ENCODE measurements at regions of chr19 and their contacts with region 1.

Region 1: GRCh38 chr19:28710278-28710677 is 502.7 kb downstream of the UQCRFS1 start:
- H3K4me3 ChIP-seq: no peak overlapping the region
- H3K27ac ChIP-seq: no peak overlapping the region
- H3K4me1 ChIP-seq: peaks cover 8% of the 10 kb centered on the region; the same call in 1 of the 2 replicates
- CTCF ChIP-seq: peak; percentile 77

Region 2: GRCh38 chr19:27966390-27966816 is 743.9 kb before region 1 on chr19:
- CTCF ChIA-PET with region 1: interaction called, 20 read pairs
- POLR2A ChIA-PET with region 1: no interaction called
- H3K4me3 ChIP-seq: no peak overlapping the region
- H3K27ac ChIP-seq: no peak overlapping the region
- H3K4me1 ChIP-seq: 0 out of 2 replicates have a peak, but pooled peaks cover 2% of the 10 kb centered on the region
- CTCF ChIP-seq: peak; percentile 55; the same call in 1 of the 2 replicates

Region 3: GRCh38 chr19:28324275-28325060 is 385.8 kb before region 1 on chr19:
- CTCF ChIA-PET with region 1: interaction called, 25 read pairs
- POLR2A ChIA-PET with region 1: no interaction called
- H3K4me3 ChIP-seq: no peak overlapping the region
- H3K27ac ChIP-seq: no peak overlapping the region
- H3K4me1 ChIP-seq: peaks cover 9% of the 10 kb centered on the region
- CTCF ChIP-seq: peak; percentile 54

Region 4: GRCh38 chr19:28466107-28467045 is 243.9 kb before region 1 on chr19:
- CTCF ChIA-PET with region 1: interaction called, 36 read pairs
- POLR2A ChIA-PET with region 1: no interaction called
- H3K4me3 ChIP-seq: no peak overlapping the region
- H3K27ac ChIP-seq: no peak overlapping the region
- H3K4me1 ChIP-seq: peaks cover 11% of the 10 kb centered on the region
- CTCF ChIP-seq: peak; percentile 80

Region 5: GRCh38 chr19:28727480-28728159 is 17.3 kb after region 1 on chr19:
- CTCF ChIA-PET with region 1: interaction called, 104 read pairs
- POLR2A ChIA-PET with region 1: interaction called, 4 read pairs
- H3K4me3 ChIP-seq: peak overlapping the region; percentile 66
- H3K27ac ChIP-seq: peak overlapping the region; percentile 69; the same call in 1 of the 2 replicates
- H3K4me1 ChIP-seq: peaks cover 8% of the 10 kb centered on the region
- CTCF ChIP-seq: peak; percentile 97

Region 6: GRCh38 chr19:28764066-28764465 is 53.8 kb after region 1 on chr19:
- CTCF ChIA-PET with region 1: no interaction called
- POLR2A ChIA-PET with region 1: no interaction called
- H3K4me3 ChIP-seq: no peak overlapping the region
- H3K27ac ChIP-seq: no peak overlapping the region
- H3K4me1 ChIP-seq: no peaks in the 10 kb centered on the region
- CTCF ChIP-seq: no peak